IMR-90 (cell line): ENCODE measurements at regions of chr14 and their contacts with region 1.

Region 1: DNA sequence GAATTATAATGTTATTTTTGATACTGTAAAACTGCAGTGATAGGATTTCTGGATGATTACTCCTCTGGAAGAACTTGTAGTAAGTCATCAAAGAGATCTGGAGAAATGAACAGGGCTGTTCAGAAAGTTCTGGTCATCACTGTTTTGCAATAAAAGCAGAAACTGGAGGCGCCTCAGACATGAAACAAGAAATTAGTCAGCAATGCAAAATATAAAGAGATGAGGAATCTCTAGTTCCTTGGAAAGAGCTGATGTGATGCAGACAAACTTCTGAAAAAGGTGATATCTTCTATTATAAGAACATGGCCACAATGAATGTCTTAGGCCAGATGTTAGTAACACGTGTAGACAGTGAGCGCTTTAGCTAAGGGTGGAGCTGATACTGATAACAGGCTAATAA is 9.5 kb downstream of the ACIN1 start:
- DNase-seq: peak; percentile 27
- ATAC-seq: peak; percentile 56
- H3K4me3 ChIP-seq: no peak overlapping the region
- H3K27ac ChIP-seq: no peak overlapping the region
- H3K4me1 ChIP-seq: no peaks in the 10 kb centered on the region; the same call in 1 of the 2 replicates
- H3K27me3 ChIP-seq: no peaks in the 10 kb centered on the region
- CTCF ChIP-seq: no peak
- POLR2A ChIP-seq: no peak
- RAD21 ChIP-seq: no peak

Region 2: DNA sequence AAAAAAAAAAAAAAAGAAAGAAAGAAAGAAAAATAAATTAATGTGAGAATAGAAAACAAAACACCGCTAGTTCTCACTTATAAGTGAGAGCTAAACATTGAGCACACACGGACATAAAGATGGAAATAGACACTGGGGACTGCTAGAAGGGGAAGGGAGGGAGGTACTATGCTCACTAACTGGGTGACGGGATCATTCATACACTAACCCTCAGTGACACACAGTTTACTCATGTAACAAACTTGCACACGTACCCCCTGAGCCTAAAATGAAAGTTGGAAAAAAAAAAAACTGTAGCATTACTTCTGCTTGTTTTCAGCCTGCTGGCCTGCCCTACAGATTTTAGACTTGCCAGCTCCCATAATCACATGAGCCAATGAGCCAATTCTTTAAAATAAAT is 145.8 kb before region 1 on chr14:
- CTCF ChIA-PET with region 1: no interaction called
- POLR2A ChIA-PET with region 1: interaction called, 29 read pairs
- dilution Hi-C with region 1: no loop called
- in situ Hi-C with region 1: no loop called
- intact Hi-C with region 1: no loop called
- DNase-seq: peak; percentile 86
- ATAC-seq: peak; percentile 87
- H3K4me3 ChIP-seq: no peak overlapping the region
- H3K27ac ChIP-seq: no peak overlapping the region
- H3K4me1 ChIP-seq: peaks cover 2% of the 10 kb centered on the region; the same call in 1 of the 2 replicates
- H3K27me3 ChIP-seq: no peaks in the 10 kb centered on the region
- CTCF ChIP-seq: no peak
- POLR2A ChIP-seq: no peak
- RAD21 ChIP-seq: no peak

Region 3: DNA sequence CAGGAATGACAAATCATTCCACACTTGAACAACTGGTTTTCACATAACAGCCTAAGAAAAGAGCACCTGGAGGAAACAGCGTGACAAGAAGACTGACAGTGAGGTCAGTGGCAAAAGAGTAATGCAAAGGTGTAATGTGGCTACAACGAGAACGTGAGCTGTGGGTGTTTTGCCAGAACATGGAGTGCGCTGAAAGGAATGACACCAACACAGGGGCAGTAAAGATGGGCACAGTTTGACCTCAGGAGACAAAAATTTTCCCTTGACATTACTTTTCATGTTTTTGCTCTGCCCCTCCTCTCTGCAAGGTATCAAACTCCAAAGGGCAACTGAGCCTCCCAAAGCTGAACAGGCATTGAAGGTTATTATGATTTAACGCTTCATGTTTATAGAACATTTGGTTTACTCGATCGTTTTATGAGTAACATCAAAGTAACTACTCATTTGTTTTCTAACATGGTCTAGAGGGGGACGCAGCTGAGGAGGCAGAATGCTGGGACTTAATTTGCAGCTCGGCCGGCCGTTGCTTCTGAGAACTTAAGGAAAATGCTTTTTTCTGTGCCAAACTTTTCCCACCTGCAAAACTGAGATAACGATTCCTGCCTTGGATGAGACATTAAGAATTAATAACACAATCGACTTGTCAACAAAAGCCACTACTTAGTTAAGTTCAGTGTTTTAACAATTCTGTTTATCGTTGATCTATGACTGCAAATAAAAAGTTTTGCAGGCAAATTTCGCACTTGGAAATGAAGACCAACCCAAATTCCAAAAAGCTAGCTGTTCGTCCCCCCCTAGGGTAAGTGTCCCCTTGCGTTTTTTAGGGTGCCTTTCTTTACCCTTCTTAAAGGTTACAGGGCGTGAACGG is 129.5 kb before region 1 on chr14:
- CTCF ChIA-PET with region 1: no interaction called
- POLR2A ChIA-PET with region 1: no interaction called
- dilution Hi-C with region 1: no loop called
- in situ Hi-C with region 1: no loop called
- intact Hi-C with region 1: no loop called
- DNase-seq: no peak
- ATAC-seq: no peak
- H3K4me3 ChIP-seq: peak overlapping the region; percentile 68
- H3K27ac ChIP-seq: peak overlapping the region; percentile 80
- H3K4me1 ChIP-seq: peaks cover 5% of the 10 kb centered on the region
- H3K27me3 ChIP-seq: no peaks in the 10 kb centered on the region
- CTCF ChIP-seq: no peak
- POLR2A ChIP-seq: no peak
- RAD21 ChIP-seq: no peak

Region 4: DNA sequence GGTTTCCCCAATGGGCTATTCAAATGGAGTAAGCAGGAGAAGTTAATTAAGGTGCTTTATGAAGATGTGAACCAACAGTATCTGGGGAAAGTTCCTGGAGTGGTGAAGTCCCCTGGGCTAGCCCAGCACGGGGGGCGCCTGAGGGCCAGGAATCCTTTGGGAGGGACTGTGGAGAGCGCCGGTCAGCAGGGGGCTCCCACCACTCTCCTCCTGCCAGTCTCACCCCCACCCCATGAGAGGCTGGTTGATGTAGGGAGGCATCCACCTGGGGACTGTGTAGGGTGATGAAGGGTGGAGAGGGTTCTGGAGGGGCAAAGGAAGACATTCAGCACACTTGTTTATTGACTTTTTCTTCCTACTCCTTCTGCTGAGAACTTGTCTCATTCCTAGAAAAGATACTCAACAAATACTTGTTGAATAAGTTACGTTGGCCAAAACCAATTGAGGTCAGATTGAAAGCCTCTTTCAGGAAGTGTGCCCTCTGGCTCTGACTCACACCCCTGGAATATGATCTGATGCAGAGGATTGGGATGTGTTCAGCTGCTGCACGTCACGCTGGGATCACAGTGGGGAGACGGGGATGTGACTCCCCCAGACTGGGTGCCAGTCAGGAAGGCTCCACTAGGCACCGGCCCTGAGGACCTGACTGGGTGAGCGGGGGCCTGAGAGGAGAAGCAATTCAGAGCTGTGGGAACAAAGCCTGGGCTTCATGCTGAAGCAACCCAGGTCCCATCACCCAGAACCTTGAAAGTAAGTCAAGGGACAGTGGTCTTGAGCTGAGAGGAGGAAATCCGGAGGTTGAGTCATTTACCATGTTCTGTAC is 29.4 kb after region 1 on chr14:
- CTCF ChIA-PET with region 1: interaction called, 12 read pairs
- POLR2A ChIA-PET with region 1: no interaction called
- dilution Hi-C with region 1: no loop called
- in situ Hi-C with region 1: no loop called
- intact Hi-C with region 1: no loop called
- DNase-seq: peak; percentile 99
- ATAC-seq: peak; percentile 88
- H3K4me3 ChIP-seq: no peak overlapping the region
- H3K27ac ChIP-seq: peak overlapping the region; percentile 79
- H3K4me1 ChIP-seq: peaks cover 29% of the 10 kb centered on the region
- H3K27me3 ChIP-seq: no peaks in the 10 kb centered on the region
- CTCF ChIP-seq: 0 out of 2 replicates have a peak, but pooled peaks have one; percentile 3
- POLR2A ChIP-seq: peak; percentile 75; the same call in 1 of the 2 replicates
- RAD21 ChIP-seq: no peak; the same call in 1 of the 2 replicates